CD4-positive, alpha-beta T cell (primary cell): ENCODE measurements at regions of chr7 and their contacts with region 1.

Region 1: DNA sequence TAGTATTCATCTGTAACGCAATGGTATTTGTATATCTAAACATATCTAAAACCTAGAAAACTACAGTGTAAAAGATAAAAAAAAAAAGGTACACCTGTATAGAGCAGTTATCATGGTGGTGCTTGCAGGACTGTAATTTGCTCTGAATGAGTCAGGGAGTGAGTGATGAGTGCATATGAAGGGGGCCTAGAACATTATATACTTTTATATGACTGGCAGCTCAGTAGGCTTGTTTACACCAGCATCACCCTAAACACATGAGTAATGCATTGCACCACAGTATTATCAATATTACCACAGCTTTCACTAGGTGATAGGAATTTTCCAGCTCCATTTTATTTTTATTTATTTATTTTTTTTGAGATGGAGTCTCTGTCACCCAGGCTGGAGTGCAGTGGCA is 40.8 kb downstream of the TRIM24 start:
- DNase-seq: no peak
- ATAC-seq: no peak
- H3K4me3 ChIP-seq: no peak overlapping the region
- H3K4me3 Mint-ChIP-seq: no peak overlapping the region
- H3K27ac ChIP-seq: no peak overlapping the region
- H3K27ac Mint-ChIP-seq: no peak overlapping the region
- H3K4me1 ChIP-seq: no peaks in the 10 kb centered on the region
- H3K4me1 Mint-ChIP-seq: peaks cover 46% of the 10 kb centered on the region
- H3K27me3 ChIP-seq: no peaks in the 10 kb centered on the region
- H3K27me3 Mint-ChIP-seq: no peaks in the 10 kb centered on the region
- CTCF ChIP-seq: no peak

Region 2: GRCh38 chr7:138550337-138550736 is 49.4 kb after region 1 on chr7:
- CTCF ChIA-PET with region 1: no interaction called
- POLR2A ChIA-PET with region 1: no interaction called
- intact Hi-C with region 1: loop called in 1 of 2 experiments (anchors 2 kb)
- DNase-seq: no peak
- ATAC-seq: no peak
- H3K4me3 ChIP-seq: no peak overlapping the region
- H3K4me3 Mint-ChIP-seq: no peak overlapping the region
- H3K27ac ChIP-seq: no peak overlapping the region
- H3K27ac Mint-ChIP-seq: no peak overlapping the region
- H3K4me1 ChIP-seq: no peaks in the 10 kb centered on the region
- H3K4me1 Mint-ChIP-seq: no peaks in the 10 kb centered on the region
- H3K27me3 ChIP-seq: no peaks in the 10 kb centered on the region
- H3K27me3 Mint-ChIP-seq: no peaks in the 10 kb centered on the region
- CTCF ChIP-seq: no peak